PC-3 (cell line): ENCODE measurements at regions of chr6 and their contacts with region 1.

Region 1: DNA sequence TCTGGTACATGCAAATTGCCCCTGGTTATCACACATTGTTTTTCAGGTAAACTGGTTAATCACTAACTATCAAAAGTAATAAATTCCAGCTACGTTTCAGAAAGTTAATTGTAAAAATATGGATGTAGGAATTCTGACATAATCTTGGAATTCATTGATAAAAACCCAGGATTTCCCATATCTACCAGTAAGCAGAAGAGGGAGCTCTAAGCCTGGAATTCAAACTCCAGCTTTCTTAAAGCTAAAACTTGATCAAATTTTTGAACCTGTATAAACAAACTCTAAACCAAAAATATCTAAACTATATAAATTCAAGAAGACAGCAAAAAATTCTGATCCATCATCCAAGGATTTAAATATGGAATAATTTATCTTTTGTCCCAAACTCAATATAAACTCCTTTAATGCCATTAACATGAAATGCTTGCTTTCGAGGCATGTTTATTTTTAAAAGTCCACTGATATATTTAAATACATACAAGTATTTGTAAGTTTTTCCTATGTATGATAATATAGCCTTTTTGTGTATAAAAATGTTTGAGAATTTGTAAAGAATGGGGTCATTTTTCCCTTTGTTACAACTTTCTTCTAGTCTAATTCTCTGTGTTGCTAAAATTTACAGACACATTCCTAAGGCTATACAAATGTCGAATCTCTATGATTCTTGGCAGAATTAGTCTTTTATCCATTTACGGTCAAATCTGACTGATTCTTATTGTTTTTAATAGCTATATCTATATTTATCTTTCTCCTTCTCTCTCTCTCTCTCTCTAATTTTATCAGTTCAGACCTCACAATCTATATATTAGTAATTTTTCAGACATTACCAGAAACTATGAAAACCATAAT is 91.4 kb upstream of the RNF217 start:
- DNase-seq: peak; percentile 48
- ATAC-seq: no peak
- H3K4me3 ChIP-seq: no peak overlapping the region
- H3K27ac ChIP-seq: no peak overlapping the region
- H3K4me1 ChIP-seq: no peaks in the 10 kb centered on the region
- H3K27me3 ChIP-seq: no peaks in the 10 kb centered on the region
- CTCF ChIP-seq: peak; percentile 73

Region 2: GRCh38 chr6:124961777-124962611 is 91.2 kb after region 1 on chr6 and contains the start of gene RNF217:
- CTCF ChIA-PET with region 1: interaction called, 6 read pairs
- POLR2A ChIA-PET with region 1: no interaction called
- intact Hi-C with region 1: loop called (anchors 5 kb)
- DNase-seq: peak; percentile 27
- ATAC-seq: peak; percentile 50
- H3K4me3 ChIP-seq: peak within 1 kb of the TSS; percentile 76
- H3K27ac ChIP-seq: peak within 1 kb of the TSS; percentile 28
- H3K4me1 ChIP-seq: peaks cover 37% of the 10 kb centered on the region
- H3K27me3 ChIP-seq: no peaks in the 10 kb centered on the region
- CTCF ChIP-seq: no peak
- total RNA-seq, gene RNF217: 4.5 and 7.7 TPM in 2 replicates

Region 3: DNA sequence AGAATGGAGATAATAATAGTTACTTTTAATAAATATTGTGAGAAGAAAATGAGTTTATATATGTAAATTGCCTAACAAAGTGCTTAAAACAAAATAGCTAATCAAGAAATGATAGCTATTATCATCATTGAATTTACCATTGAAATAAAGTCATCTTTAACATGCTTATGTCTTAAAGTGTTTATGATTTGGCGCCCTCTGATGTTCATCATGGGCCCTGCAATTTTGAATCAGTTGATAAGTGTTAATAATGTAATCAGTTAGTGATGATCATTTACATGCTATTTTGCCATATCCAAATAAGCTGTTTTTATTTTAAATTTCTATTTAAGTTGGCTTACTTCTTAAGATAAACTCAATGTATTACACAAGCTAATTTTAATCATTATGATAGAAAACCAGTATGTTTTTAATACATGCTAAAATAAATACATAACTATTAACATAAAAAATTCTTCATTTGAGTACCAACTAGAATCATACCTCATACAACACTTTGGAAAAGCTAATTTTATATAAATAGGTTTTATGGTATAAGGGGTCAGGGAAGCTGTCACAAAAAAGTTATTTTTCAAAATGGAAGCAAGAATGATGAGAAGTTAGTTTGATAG is 243.5 kb after region 1 on chr6:
- CTCF ChIA-PET with region 1: interaction called, 7 read pairs
- POLR2A ChIA-PET with region 1: no interaction called
- intact Hi-C with region 1: loop called (anchors 1 kb)
- DNase-seq: peak; percentile 74
- ATAC-seq: no peak
- H3K4me3 ChIP-seq: no peak overlapping the region
- H3K27ac ChIP-seq: no peak overlapping the region
- H3K4me1 ChIP-seq: no peaks in the 10 kb centered on the region
- H3K27me3 ChIP-seq: no peaks in the 10 kb centered on the region
- CTCF ChIP-seq: peak; percentile 84

Region 4: GRCh38 chr6:125170376-125170775 is 299.5 kb after region 1 on chr6:
- CTCF ChIA-PET with region 1: no interaction called
- POLR2A ChIA-PET with region 1: no interaction called
- intact Hi-C with region 1: no loop called
- DNase-seq: no peak
- ATAC-seq: no peak
- H3K4me3 ChIP-seq: no peak overlapping the region
- H3K27ac ChIP-seq: no peak overlapping the region
- H3K4me1 ChIP-seq: 0 out of 2 replicates have a peak, but pooled peaks cover 12% of the 10 kb centered on the region
- H3K27me3 ChIP-seq: no peaks in the 10 kb centered on the region
- CTCF ChIP-seq: no peak

Region 5: GRCh38 chr6:125314019-125314581 is 443.3 kb after region 1 on chr6:
- CTCF ChIA-PET with region 1: no interaction called
- POLR2A ChIA-PET with region 1: no interaction called
- intact Hi-C with region 1: loop called (anchors 2 kb)
- DNase-seq: peak; percentile 62
- ATAC-seq: peak; percentile 88
- H3K4me3 ChIP-seq: no peak overlapping the region
- H3K27ac ChIP-seq: no peak overlapping the region
- H3K4me1 ChIP-seq: no peaks in the 10 kb centered on the region
- H3K27me3 ChIP-seq: peaks cover 18% of the 10 kb centered on the region
- CTCF ChIP-seq: peak; percentile 81